ENCODE measurements at regions of chr1 and their contacts with region 1.

Region 1: DNA sequence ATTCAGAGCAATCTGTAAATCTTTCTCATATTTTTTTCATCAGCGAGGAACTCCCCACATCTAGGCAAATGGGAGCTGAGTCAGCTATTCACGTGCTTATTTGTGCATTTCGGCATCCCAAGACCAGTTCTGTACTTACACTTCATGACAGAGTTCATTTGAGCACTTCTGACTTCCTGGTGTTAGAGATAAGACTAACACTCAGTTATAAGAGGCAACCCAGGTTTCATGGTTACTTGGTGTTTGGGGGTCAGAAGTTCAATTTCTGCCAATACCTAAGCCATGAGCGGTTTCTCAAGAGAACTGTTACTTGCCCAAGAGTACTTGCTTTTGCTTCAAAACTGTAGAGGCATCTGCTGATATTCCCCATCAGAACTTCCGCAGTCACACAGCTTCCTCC is 24.1 kb upstream of the DESI2 start:
- DNase-seq: no peak
- H3K4me3 ChIP-seq: no peak overlapping the region
- H3K27ac ChIP-seq: no peak overlapping the region
- H3K4me1 ChIP-seq: no peaks in the 10 kb centered on the region
- CTCF ChIP-seq: no peak

Region 2: DNA sequence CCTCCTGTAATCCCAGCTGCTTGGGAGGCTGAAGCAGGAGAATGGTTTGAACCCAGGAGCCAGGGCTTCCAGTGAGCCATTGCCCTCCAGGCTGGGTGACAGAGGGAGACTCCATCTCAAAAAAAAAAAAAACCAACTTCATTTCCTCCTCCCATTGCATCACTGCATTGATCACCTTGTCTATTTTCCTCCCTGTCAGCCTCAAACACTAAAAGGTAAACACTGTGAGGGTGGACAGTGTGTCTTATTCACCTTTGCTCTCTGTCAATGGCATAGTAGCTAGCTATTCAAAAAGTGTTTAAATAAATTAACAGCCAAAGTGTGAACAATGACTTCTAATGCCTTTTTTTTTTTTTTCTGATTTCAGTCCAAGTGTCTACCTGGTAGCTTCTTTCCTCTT is 10.8 kb after region 1 on chr1:
- CTCF ChIA-PET with region 1: no interaction called
- POLR2A ChIA-PET with region 1: interaction called, 10 read pairs
- intact Hi-C with region 1: no loop called
- DNase-seq: no peak
- H3K4me3 ChIP-seq: no peak overlapping the region
- H3K27ac ChIP-seq: no peak overlapping the region
- H3K4me1 ChIP-seq: no peaks in the 10 kb centered on the region
- CTCF ChIP-seq: no peak

Region 3: GRCh38 chr1:245972476-245973207 is 1343.9 kb after region 1 on chr1:
- CTCF ChIA-PET with region 1: no interaction called
- POLR2A ChIA-PET with region 1: interaction called, 11 read pairs
- intact Hi-C with region 1: no loop called
- DNase-seq: no peak
- H3K4me3 ChIP-seq: no peak overlapping the region
- H3K27ac ChIP-seq: no peak overlapping the region
- H3K4me1 ChIP-seq: no peaks in the 10 kb centered on the region
- CTCF ChIP-seq: no peak